Activated naive CD4-positive, alpha-beta T cell treated with anti-CD3 and anti-CD28 coated beads for 36 hours (primary cell): ENCODE measurements at regions of chr5 and their contacts with region 1.

Region 1: DNA sequence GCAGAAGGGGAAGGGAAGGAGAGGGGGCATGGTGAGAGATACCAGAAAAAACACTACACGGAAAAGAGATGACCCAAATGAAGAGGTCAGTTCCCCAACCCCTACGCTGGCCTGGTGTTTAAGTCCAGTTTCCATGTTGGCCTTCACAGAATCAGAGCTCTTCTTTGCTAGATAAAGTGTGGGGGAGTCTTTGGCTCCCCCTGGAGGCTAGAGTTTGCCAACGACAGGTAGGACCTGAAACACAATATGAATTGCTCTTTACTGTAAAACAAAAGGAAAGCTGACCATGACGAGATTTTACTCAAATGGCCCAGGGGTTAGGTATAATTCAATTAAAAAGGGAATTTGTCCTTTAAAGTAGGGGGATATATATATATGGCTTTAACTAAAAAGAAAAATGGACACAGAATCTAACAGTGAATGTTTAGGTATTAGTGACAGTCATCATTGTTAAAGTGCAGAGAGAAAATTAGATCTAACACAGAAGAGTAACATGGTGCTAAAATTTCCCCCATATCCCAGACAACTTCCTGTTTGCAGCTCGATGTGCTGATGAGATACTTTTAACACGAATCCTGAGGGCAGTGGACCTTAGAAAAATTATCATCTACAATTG is 92.0 kb downstream of the SV2C start:
- DNase-seq: peak; percentile 67
- H3K4me3 Mint-ChIP-seq: no peak overlapping the region
- H3K27ac Mint-ChIP-seq: no peak overlapping the region
- H3K4me1 Mint-ChIP-seq: peaks cover 14% of the 10 kb centered on the region
- H3K27me3 Mint-ChIP-seq: no peaks in the 10 kb centered on the region

Region 2: DNA sequence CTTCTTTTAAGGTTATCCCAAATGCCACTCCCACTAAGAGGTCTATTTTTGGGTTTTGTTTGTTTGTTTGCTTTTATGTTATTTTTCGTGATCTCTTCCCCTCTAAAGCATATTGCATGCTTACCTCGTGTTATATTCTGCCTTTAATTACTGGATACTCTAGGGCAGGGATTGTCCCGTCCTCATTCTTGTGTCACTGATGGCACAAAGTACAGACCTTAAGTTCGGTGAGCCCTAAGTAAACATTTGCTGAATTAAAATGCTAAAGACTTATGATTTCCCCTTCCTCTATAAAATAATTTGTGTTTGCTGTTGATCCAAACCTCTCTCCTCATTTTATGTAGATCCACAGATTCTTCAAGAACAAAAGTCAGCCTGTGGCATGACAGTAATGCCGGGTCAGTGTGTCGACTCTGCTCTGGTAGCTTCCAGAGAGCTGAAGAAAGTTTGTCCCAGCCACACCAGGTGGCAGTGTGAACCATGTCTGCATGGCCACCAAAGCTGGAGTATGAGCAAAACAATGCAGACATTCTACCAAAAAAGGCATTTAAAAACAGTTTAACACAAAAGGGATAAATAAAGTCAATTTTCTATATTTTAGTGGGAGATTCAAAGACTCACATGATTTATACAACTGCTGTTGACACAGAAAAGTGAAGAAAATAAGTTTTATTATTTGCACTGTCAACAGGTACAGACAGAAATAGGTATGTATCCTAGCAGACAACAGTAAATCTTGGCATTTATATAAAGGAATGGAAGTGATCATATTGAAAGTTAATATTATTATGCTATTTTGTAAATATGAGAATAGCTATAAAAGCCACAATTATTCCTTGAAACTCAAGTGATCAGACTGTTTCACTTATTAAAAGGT is 440.0 kb before region 1 on chr5:
- CTCF ChIA-PET with region 1: interaction called, 7 read pairs
- intact Hi-C with region 1: loop called (anchors 1 kb)
- DNase-seq: peak; percentile 46
- H3K4me3 Mint-ChIP-seq: no peak overlapping the region
- H3K27ac Mint-ChIP-seq: no peak overlapping the region
- H3K4me1 Mint-ChIP-seq: no peaks in the 10 kb centered on the region
- H3K27me3 Mint-ChIP-seq: peaks cover 2% of the 10 kb centered on the region

Region 3: DNA sequence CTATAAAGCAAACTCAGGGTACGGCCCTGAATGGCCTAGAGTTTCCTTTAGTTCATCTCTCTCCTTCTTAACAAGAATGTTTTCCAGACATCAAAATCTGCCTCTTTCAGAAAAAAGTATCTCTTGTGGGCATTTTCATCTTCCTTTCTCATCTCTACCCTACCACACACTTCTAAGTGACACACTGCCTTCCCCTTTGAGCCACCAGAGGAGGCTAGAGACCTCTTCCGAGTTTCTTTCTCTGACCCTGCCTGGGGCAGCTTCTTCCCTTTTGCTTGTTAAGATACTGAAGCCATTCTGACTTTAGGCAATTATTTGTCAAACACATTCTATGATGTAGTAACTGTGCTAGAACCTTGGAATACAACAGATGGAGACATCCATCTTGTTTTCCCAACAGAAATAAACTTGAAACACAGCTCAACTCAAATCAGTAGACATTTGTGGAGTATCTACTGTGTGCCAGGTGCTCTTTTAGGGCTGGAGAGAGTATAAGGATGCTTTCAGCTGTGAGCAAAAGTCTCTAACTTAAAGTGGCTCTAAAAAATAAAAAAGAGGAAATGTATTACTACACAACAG is 100.6 kb before region 1 on chr5:
- CTCF ChIA-PET with region 1: interaction called, 9 read pairs
- intact Hi-C with region 1: loop called (anchors 1 kb)
- DNase-seq: peak; percentile 48
- H3K4me3 Mint-ChIP-seq: no peak overlapping the region
- H3K27ac Mint-ChIP-seq: no peak overlapping the region
- H3K4me1 Mint-ChIP-seq: no peaks in the 10 kb centered on the region
- H3K27me3 Mint-ChIP-seq: peaks cover 36% of the 10 kb centered on the region

Region 4: GRCh38 chr5:76145945-76146344 is 29.2 kb before region 1 on chr5:
- CTCF ChIA-PET with region 1: interaction called, 24 read pairs
- intact Hi-C with region 1: no loop called
- DNase-seq: peak; percentile 22
- H3K4me3 Mint-ChIP-seq: no peak overlapping the region
- H3K27ac Mint-ChIP-seq: no peak overlapping the region
- H3K4me1 Mint-ChIP-seq: no peaks in the 10 kb centered on the region
- H3K27me3 Mint-ChIP-seq: no peaks in the 10 kb centered on the region

Region 5: DNA sequence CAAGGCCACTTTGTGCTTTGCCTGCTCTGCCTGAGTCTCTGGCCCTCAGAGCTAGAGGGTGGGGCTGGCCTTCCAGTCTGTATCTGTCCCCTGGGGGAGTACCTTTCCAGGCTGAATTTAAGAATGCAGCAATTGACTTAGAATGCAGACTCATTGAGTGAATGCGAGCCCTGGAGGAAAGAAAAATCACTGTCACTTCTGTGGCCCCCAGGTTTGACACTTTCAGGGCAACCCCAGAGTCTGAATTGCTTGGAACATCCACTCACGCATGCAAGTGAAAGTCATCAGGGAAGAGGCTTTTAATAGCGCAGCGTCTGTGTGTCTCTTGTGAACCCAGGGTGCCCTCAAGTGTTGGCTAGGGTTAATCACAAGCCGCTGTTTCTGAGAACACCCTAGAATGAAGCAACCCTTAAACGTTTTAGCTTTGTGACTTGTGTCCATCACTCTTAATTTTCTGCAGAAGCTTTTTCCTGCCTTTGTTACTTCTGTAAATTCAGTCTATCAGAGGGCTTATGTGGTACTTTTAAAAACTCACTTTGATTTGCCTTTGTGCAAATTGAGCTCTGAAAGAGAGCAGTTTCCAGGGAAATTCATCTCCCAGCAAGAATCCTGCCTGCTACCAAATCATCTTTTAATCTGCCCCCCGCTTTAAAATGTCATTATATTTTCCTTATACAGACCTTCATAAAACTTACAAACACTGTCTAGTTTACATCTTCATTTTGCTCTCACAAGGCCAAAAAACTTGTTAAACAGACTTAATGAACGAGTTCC is 81.1 kb after region 1 on chr5:
- CTCF ChIA-PET with region 1: interaction called, 4 read pairs
- intact Hi-C with region 1: loop called (anchors 2 kb)
- DNase-seq: peak; percentile 79
- H3K4me3 Mint-ChIP-seq: no peak overlapping the region
- H3K27ac Mint-ChIP-seq: no peak overlapping the region
- H3K4me1 Mint-ChIP-seq: peaks cover 2% of the 10 kb centered on the region
- H3K27me3 Mint-ChIP-seq: peaks cover 3% of the 10 kb centered on the region

Region 6: DNA sequence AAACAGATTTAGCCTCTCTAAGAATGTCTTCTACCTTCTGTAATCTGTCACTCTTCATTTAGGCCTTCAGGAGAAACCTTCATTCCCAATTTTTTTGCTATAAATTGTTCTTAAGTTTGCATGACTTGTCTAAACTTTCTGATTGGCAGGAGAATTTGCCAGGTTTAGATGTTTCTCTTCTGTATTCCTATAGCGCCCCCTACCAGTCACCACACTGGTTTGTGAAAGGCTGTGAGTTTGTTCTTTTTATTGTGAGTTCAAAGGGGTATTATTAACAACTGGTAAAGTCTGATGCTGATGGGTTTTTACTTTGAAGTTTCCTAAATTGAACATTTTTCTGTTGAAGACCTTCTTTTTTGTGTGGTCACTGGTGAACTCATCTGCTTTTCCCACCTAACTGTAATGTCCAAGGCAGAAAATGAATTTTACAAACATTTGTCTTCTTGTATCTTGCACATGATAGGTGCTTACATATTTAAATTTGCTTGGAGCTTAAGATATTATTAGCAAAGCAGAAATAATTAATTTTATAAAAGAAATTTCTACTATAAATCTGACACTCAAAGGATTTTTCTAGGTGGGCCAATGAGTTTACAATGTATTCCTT is 466.5 kb after region 1 on chr5:
- CTCF ChIA-PET with region 1: no interaction called
- intact Hi-C with region 1: loop called (anchors 1 kb)
- DNase-seq: peak; percentile 87
- H3K4me3 Mint-ChIP-seq: no peak overlapping the region
- H3K27ac Mint-ChIP-seq: no peak overlapping the region
- H3K4me1 Mint-ChIP-seq: peaks cover 4% of the 10 kb centered on the region
- H3K27me3 Mint-ChIP-seq: no peaks in the 10 kb centered on the region